IMR-90 (cell line): ENCODE measurements at regions of chr12 and their contacts with region 1.

Region 1: GRCh38 chr12:122834104-122834920 is 945 bp upstream of the HIP1R start:
- DNase-seq: peak; percentile 44
- ATAC-seq: peak; percentile 52
- H3K4me3 ChIP-seq: peak overlapping the region; percentile 62
- H3K27ac ChIP-seq: peak overlapping the region; percentile 18; the same call in 1 of the 2 replicates
- H3K4me1 ChIP-seq: no peaks in the 10 kb centered on the region; the same call in 1 of the 2 replicates
- H3K27me3 ChIP-seq: peaks cover 2% of the 10 kb centered on the region; the same call in 1 of the 2 replicates
- CTCF ChIP-seq: no peak
- POLR2A ChIP-seq: no peak
- RAD21 ChIP-seq: no peak

Region 2: GRCh38 chr12:122471324-122472226 is 362.7 kb before region 1 on chr12:
- CTCF ChIA-PET with region 1: no interaction called
- POLR2A ChIA-PET with region 1: no interaction called
- dilution Hi-C with region 1: no loop called
- in situ Hi-C with region 1: no loop called
- intact Hi-C with region 1: no loop called
- DNase-seq: peak; percentile 84
- ATAC-seq: peak; percentile 94
- H3K4me3 ChIP-seq: no peak overlapping the region
- H3K27ac ChIP-seq: peak overlapping the region; percentile 82; the same call in 1 of the 2 replicates
- H3K4me1 ChIP-seq: peaks cover 4% of the 10 kb centered on the region; the same call in 1 of the 2 replicates
- H3K27me3 ChIP-seq: no peaks in the 10 kb centered on the region
- CTCF ChIP-seq: peak; percentile 87
- POLR2A ChIP-seq: no peak
- RAD21 ChIP-seq: peak; percentile 80

Region 3: GRCh38 chr12:122687086-122687485 is 147.2 kb before region 1 on chr12:
- CTCF ChIA-PET with region 1: no interaction called
- POLR2A ChIA-PET with region 1: no interaction called
- dilution Hi-C with region 1: no loop called
- in situ Hi-C with region 1: no loop called
- intact Hi-C with region 1: no loop called
- DNase-seq: peak; percentile 25
- ATAC-seq: no peak
- H3K4me3 ChIP-seq: no peak overlapping the region
- H3K27ac ChIP-seq: no peak overlapping the region
- H3K4me1 ChIP-seq: no peaks in the 10 kb centered on the region
- H3K27me3 ChIP-seq: no peaks in the 10 kb centered on the region
- CTCF ChIP-seq: no peak
- POLR2A ChIP-seq: no peak
- RAD21 ChIP-seq: no peak

Region 4: GRCh38 chr12:122909442-122910288 is 75.4 kb after region 1 on chr12:
- CTCF ChIA-PET with region 1: no interaction called
- POLR2A ChIA-PET with region 1: no interaction called
- dilution Hi-C with region 1: no loop called
- in situ Hi-C with region 1: no loop called
- intact Hi-C with region 1: no loop called
- DNase-seq: no peak
- ATAC-seq: no peak
- H3K4me3 ChIP-seq: no peak overlapping the region
- H3K27ac ChIP-seq: no peak overlapping the region
- H3K4me1 ChIP-seq: 0 out of 2 replicates have a peak, but pooled peaks cover 2% of the 10 kb centered on the region
- H3K27me3 ChIP-seq: no peaks in the 10 kb centered on the region
- CTCF ChIP-seq: no peak
- POLR2A ChIP-seq: no peak
- RAD21 ChIP-seq: no peak

Region 5: GRCh38 chr12:123723765-123724164 is 889.5 kb after region 1 on chr12:
- CTCF ChIA-PET with region 1: no interaction called
- POLR2A ChIA-PET with region 1: interaction called, 20 read pairs
- dilution Hi-C with region 1: no loop called
- in situ Hi-C with region 1: no loop called
- intact Hi-C with region 1: no loop called
- DNase-seq: no peak
- ATAC-seq: no peak
- H3K4me3 ChIP-seq: no peak overlapping the region
- H3K27ac ChIP-seq: no peak overlapping the region
- H3K4me1 ChIP-seq: no peaks in the 10 kb centered on the region
- H3K27me3 ChIP-seq: no peaks in the 10 kb centered on the region
- CTCF ChIP-seq: no peak
- POLR2A ChIP-seq: no peak
- RAD21 ChIP-seq: no peak